ENCODE measurements at regions of chr7 and their contacts with region 1.

Region 1: GRCh38 chr7:112550468-112551060 is 69.8 kb downstream of the LSMEM1 start:
- DNase-seq: peak; percentile 83
- H3K4me3 Mint-ChIP-seq: no peak overlapping the region
- H3K27ac Mint-ChIP-seq: no peak overlapping the region
- H3K4me1 Mint-ChIP-seq: no peaks in the 10 kb centered on the region
- H3K27me3 Mint-ChIP-seq: peaks cover 7% of the 10 kb centered on the region

Region 2: DNA sequence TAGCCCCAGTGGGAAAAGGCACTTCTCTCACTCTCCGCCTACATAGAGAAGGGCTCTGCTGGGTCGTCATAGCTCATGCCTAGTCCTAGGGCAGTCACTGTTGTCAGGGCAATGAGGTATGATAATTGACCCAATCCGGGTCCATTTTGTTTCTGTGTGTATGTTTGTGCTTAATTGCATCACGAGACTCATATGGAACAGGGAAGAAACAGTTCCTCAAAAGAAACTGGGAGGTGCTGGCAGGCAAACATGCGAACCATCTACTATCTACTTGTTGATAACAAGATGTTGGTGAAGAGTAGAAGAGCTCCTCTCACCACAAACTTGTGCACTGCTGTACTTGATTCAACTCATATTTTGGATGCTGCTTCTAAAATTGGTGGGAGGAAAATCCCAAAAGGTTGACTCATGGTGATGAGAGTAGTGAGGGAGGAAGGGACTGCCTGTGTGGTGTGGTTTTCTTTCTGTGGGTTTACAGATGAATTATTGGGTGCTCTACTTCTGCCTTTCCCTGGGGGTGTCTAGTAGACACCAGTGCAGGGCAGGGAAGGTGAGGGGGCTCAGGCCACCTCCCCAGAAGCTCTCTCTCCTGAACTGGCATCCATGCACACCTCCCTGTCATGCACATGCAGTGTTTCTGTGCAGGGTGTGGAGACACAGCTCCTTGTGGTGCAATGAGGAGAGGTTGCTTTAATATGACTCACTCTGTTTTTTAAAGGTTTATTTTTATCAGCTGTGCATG is 40.4 kb before region 1 on chr7:
- intact Hi-C with region 1: no loop called
- DNase-seq: peak; percentile 59
- H3K4me3 Mint-ChIP-seq: peak overlapping the region; percentile 49
- H3K27ac Mint-ChIP-seq: peak overlapping the region; percentile 87
- H3K4me1 Mint-ChIP-seq: peaks cover 20% of the 10 kb centered on the region
- H3K27me3 Mint-ChIP-seq: peaks cover 4% of the 10 kb centered on the region

Region 3: DNA sequence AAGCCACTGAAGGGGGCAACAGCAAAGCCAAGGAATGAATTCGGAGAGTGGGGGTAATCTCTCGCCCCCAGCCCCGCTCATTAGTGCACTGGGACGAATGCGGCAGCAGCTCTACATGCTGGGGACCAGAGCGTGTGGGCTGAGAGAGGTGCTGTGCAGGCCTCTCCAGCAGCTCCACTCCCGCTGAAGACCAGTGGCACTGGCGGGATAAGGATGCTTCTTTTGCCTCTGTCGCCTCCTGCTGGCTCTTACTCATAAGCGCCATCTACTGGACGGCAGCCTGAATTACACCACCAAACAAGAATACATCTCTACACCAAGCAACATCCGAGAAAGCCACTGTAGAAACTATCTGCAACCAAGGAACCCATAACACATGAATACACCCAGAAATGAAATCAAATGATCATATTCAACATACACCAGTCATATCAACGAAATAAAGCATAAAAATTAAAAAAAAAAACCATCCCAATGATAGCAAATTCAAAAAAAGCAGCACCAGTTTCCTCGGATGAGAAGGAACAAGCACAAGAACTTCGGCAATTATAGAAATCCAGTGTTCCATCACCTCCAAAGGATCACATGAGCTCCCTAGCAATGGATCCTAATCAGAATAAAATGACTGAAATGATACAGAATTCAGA is 318.7 kb after region 1 on chr7:
- intact Hi-C with region 1: loop called (anchors 1 kb)
- DNase-seq: peak; percentile 84
- H3K4me3 Mint-ChIP-seq: no peak overlapping the region
- H3K27ac Mint-ChIP-seq: no peak overlapping the region
- H3K4me1 Mint-ChIP-seq: peaks cover 7% of the 10 kb centered on the region
- H3K27me3 Mint-ChIP-seq: no peaks in the 10 kb centered on the region

Region 4: GRCh38 chr7:112898432-112899290 is 348.1 kb after region 1 on chr7:
- intact Hi-C with region 1: loop called (anchors 1 kb)
- DNase-seq: peak; percentile 83
- H3K4me3 Mint-ChIP-seq: no peak overlapping the region
- H3K27ac Mint-ChIP-seq: no peak overlapping the region
- H3K4me1 Mint-ChIP-seq: no peaks in the 10 kb centered on the region
- H3K27me3 Mint-ChIP-seq: no peaks in the 10 kb centered on the region

Region 5: DNA sequence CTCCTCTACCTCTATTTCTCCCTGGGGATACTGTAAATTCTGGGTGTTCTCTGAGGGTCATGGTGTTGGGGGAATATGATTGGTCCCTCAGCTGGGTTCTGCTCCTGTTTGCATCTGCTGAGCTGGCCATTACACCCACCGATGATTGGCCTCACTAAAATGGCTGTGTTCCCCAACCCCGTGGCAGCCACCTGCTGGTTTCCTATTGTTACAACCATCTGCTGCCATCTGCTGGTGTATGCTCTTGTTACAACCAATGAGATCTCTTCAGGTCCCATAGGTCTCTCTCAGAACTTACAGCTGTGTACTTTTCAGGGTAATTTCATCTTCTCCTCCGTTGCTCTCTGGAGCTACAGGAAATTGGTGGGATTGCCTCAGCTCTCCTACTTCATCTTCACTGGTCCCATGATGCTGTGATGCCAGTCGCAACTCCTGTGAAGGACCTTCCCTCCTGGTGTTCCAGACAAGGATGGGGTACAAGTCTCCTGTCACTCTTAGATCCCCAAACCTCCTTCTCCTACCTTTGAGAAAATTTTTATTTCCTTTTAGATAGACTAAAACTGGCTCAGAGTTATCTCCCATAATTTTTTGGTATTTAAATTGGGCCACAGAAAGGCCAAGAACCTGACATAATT is 871.2 kb after region 1 on chr7:
- intact Hi-C with region 1: loop called (anchors 1 kb)
- DNase-seq: peak; percentile 91
- H3K4me3 Mint-ChIP-seq: no peak overlapping the region
- H3K27ac Mint-ChIP-seq: no peak overlapping the region
- H3K4me1 Mint-ChIP-seq: peaks cover 5% of the 10 kb centered on the region
- H3K27me3 Mint-ChIP-seq: no peaks in the 10 kb centered on the region

Measured in activated CD4-positive, alpha-beta T cell treated with anti-CD3 and anti-CD28 coated beads, Interleukin-2, amount 10 ng/mL, durations not matched to agents 24 days and 14 days (primary cell).